A549 (cell line): ENCODE measurements at regions of chr17 and their contacts with region 1.

Region 1: GRCh38 chr17:2844416-2844815 is 48.2 kb downstream of the RAP1GAP2 start:
- DNase-seq: peak; percentile 76 to 96
- ATAC-seq: peak; percentile 85 to 86
- H3K4me3 ChIP-seq: no peak overlapping the region
- H3K27ac ChIP-seq: peak overlapping the region; percentile 70 to 84
- H3K4me1 ChIP-seq: peaks cover 46% of the 10 kb centered on the region
- CTCF ChIP-seq: no peak
- EP300 ChIP-seq: peak; percentile 50 to 58; a peak in 2 of 5 replicates
- POLR2A ChIP-seq: no peak
- RAD21 ChIP-seq: 0 out of 5 replicates have a peak, but pooled peaks of 1 of the 2 experiments have one; percentile 14

Region 2: GRCh38 chr17:2532146-2532720 is 312.2 kb before region 1 on chr17:
- CTCF ChIA-PET with region 1: no interaction called
- POLR2A ChIA-PET with region 1: no interaction called
- DNase-seq: no peak
- ATAC-seq: no peak
- H3K4me3 ChIP-seq: no peak overlapping the region
- H3K27ac ChIP-seq: no peak overlapping the region
- H3K4me1 ChIP-seq: peaks cover under 1% of the 10 kb centered on the region
- CTCF ChIP-seq: no peak
- EP300 ChIP-seq: no peak
- POLR2A ChIP-seq: no peak
- RAD21 ChIP-seq: no peak

Region 3: GRCh38 chr17:2647957-2648356 is 196.5 kb before region 1 on chr17:
- CTCF ChIA-PET with region 1: no interaction called
- POLR2A ChIA-PET with region 1: no interaction called
- DNase-seq: no peak
- ATAC-seq: no peak
- H3K4me3 ChIP-seq: no peak overlapping the region
- H3K27ac ChIP-seq: no peak overlapping the region
- H3K4me1 ChIP-seq: peaks cover 24% of the 10 kb centered on the region
- CTCF ChIP-seq: no peak
- EP300 ChIP-seq: no peak
- POLR2A ChIP-seq: no peak
- RAD21 ChIP-seq: no peak

Region 4: DNA sequence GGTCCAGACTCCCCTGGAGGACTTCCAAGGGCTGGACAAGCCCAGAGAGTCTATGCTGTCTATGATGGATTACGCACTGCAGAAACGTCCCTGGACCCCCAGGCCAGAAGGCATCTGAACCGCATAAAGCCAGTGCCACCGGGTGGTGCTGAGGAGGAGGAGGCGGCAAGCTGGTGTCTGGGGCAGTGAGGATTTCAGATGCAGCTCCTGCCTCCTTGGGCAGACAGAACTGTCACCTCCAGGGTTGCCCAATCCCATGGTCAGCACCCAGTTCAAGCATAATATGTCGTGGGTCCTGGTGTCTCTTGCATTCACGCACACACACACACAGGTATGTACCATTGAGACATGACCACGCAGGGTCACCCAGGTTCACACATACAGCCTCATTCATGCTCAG is 22.5 kb before region 1 on chr17:
- CTCF ChIA-PET with region 1: interaction called, 267 read pairs
- POLR2A ChIA-PET with region 1: no interaction called
- DNase-seq: no peak
- ATAC-seq: peak; percentile 35 to 55; a peak in 4 of 6 replicates
- H3K4me3 ChIP-seq: no peak overlapping the region
- H3K27ac ChIP-seq: no peak overlapping the region
- H3K4me1 ChIP-seq: no peaks in the 10 kb centered on the region
- CTCF ChIP-seq: no peak
- EP300 ChIP-seq: no peak
- POLR2A ChIP-seq: no peak
- RAD21 ChIP-seq: no peak

Region 5: DNA sequence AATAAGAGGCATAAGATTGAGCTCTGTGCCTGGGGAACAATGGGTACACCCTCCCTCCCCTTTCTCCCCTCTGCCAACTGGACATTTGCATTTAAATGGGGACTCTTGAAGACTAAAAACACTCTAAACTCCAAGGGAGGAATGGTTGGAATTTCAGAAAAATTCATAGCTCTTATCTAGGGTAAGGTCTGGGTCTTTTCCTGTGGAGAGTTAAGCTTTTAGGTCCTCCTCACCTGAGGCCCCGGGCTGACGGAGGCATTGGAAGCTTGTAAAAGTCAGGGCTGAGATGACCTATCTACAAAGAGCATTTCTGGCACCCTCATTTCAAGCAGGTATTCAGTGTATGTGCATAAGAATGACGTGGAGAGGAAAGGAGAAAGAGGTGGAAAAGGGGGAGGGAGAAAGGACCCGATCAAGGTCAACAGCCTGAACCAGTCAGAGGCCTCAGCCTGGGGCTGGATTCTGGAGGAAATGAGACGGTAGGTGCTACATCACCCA is 29.8 kb after region 1 on chr17:
- CTCF ChIA-PET with region 1: interaction called, 30 read pairs
- POLR2A ChIA-PET with region 1: interaction called, 3 read pairs
- DNase-seq: peak in 1 of 2 experiments; percentile 48
- ATAC-seq: peak in 1 of 2 experiments; percentile 61; a peak in 4 of 6 replicates
- H3K4me3 ChIP-seq: no peak overlapping the region
- H3K27ac ChIP-seq: peak overlapping the region in 1 of 2 experiments; percentile 5; a peak in 1 of 6 replicates
- H3K4me1 ChIP-seq: peaks cover 8% of the 10 kb centered on the region; the same call in 2 of the 3 replicates
- CTCF ChIP-seq: no peak
- EP300 ChIP-seq: no peak
- POLR2A ChIP-seq: no peak
- RAD21 ChIP-seq: no peak

Region 6: DNA sequence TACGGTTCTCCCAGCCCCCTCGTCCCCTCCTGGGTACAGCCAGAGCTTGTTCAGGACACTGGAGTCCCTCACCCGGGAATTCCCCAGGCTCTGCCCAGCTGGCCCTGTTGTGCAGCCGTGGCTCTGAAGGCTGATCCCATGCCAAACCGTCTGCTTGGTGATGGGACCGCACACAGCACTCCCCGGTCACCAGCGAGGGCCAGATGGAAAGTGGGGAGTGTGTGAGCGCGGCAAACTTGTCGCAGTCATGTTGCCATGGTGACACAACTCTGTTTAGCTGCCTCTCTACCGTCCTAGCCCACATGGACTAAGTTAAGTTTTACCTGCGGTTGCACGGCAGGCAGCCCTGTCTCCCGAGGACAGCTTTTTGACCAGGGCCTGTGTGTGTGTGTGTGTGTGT is 59.7 kb after region 1 on chr17:
- CTCF ChIA-PET with region 1: interaction called, 14 read pairs
- POLR2A ChIA-PET with region 1: no interaction called
- DNase-seq: no peak
- ATAC-seq: peak; percentile 5 to 18; a peak in 3 of 6 replicates
- H3K4me3 ChIP-seq: no peak overlapping the region
- H3K27ac ChIP-seq: 0 out of 6 replicates have a peak overlapping the region, but pooled peaks of 1 of the 2 experiments have one; percentile 23
- H3K4me1 ChIP-seq: peaks cover 5% of the 10 kb centered on the region; the same call in 1 of the 3 replicates
- CTCF ChIP-seq: no peak
- EP300 ChIP-seq: no peak
- POLR2A ChIP-seq: no peak
- RAD21 ChIP-seq: no peak

Region 7: GRCh38 chr17:2949469-2950044 is 105.1 kb after region 1 on chr17:
- CTCF ChIA-PET with region 1: interaction called, 327 read pairs
- POLR2A ChIA-PET with region 1: no interaction called
- DNase-seq: peak; percentile 87 to 89
- ATAC-seq: peak; percentile 87 to 94
- H3K4me3 ChIP-seq: no peak overlapping the region
- H3K27ac ChIP-seq: peak overlapping the region; percentile 62 to 63
- H3K4me1 ChIP-seq: peaks cover 32% of the 10 kb centered on the region
- CTCF ChIP-seq: no peak
- EP300 ChIP-seq: no peak
- POLR2A ChIP-seq: no peak
- RAD21 ChIP-seq: 0 out of 5 replicates have a peak, but pooled peaks of 1 of the 2 experiments have one; percentile 10

Region 8: DNA sequence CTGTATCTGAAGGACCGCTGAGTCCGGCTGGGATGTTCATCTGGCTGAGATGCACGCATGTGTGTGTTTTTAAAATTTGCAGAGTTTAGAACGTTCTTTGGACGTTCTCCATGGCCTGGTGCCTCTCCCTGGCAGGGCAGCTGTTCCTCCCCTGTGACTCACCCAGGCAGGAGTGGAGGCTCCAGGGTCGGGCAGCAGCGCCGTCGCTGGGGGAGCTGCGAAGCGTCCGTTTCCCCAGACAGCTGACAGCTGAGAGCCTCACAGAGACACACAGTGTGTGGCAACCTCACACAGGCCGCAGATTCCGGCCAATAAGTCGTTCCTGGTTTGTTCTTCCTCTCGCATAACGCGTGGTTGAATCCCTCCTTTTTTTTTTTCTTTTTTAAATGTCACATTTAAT is 138.4 kb after region 1 on chr17:
- CTCF ChIA-PET with region 1: interaction called, 41 read pairs
- POLR2A ChIA-PET with region 1: no interaction called
- DNase-seq: peak; percentile 77 to 89
- ATAC-seq: peak; percentile 98
- H3K4me3 ChIP-seq: no peak overlapping the region
- H3K27ac ChIP-seq: peak overlapping the region; percentile 54 to 63
- H3K4me1 ChIP-seq: peaks cover 12% of the 10 kb centered on the region
- CTCF ChIP-seq: peak; percentile 30; the same call in 2 of the 3 replicates
- EP300 ChIP-seq: no peak
- POLR2A ChIP-seq: no peak
- RAD21 ChIP-seq: peak; percentile 56 to 67

Region 9: DNA sequence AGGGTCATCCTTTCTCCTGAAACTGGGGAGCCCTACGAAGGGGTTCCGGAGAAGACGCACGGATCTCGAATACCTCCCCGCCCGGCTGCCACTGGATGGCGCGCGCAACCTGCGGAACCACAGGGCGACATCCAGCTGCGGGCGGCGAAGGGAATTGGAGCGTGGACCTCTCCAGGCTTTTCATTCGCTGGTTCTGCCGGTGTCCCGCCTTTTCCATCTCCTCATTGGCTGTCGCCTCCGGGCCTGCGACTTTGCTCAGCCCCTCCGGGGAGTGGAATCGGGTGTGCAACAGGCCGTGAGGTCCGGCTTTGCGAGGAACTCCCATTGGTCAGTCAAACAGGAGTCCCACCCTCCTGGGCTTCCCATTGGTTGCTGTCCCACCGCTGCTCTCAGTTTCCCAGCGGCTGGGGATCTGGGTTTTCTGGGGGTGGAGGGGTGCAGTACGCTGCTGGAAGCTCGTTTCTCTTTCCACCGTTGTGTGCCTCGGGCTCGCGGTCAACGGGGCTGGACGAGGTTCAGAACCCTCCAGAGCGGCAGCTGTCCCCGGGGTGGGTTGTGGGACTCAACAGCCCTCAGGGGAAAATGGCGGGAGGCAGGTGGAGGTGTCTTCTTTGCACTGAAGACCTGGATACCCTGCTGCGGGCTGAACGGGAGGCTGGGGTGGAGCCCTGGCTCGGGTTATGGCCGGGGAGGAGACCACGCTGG is 204.5 kb after region 1 on chr17:
- CTCF ChIA-PET with region 1: interaction called, 16 read pairs
- POLR2A ChIA-PET with region 1: interaction called, 3 read pairs
- DNase-seq: peak; percentile 96 to 99
- ATAC-seq: peak; percentile 99
- H3K4me3 ChIP-seq: peak overlapping the region; percentile 58
- H3K27ac ChIP-seq: peak overlapping the region; percentile 74 to 91
- H3K4me1 ChIP-seq: peaks cover 8% of the 10 kb centered on the region; the same call in 1 of the 3 replicates
- CTCF ChIP-seq: peak; percentile 95
- EP300 ChIP-seq: no peak
- POLR2A ChIP-seq: peak; percentile 80
- RAD21 ChIP-seq: peak; percentile 97 to 99